ENCODE measurements at regions of chr5 and their contacts with region 1.

Region 1: DNA sequence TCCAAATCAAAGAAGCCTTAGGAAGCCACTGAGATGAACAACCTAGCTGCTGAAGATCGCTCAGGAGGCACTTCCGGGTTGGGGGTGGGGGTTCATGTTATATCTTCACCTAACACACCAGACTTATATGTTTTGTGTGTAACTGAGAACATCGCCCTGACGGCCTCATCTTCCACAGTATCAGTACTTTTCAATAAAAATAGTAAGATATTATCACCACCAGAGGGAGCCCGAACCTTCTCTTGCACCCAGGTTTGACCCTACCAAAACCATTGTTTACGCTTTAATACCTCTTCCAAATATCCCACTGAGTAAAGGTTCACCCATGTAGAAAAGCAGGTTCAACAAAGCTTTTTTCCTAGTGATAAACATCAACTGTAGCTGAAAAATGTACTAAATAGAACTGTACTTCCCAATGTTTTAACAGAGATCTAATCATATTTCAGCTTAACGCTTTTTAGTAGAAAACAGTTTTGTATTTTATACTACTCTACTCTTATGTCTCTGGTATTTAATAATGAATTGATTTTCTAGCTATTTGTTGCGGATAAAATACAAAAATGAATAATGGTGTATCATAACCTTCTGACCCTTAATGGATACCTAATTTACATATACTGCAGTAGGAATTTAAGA is 244.0 kb downstream of the EPB41L4A start:
- DNase-seq: peak; percentile 71
- H3K4me3 Mint-ChIP-seq: no peak overlapping the region
- H3K27ac Mint-ChIP-seq: no peak overlapping the region
- H3K4me1 Mint-ChIP-seq: no peaks in the 10 kb centered on the region
- H3K27me3 Mint-ChIP-seq: no peaks in the 10 kb centered on the region
- CTCF ChIP-seq: peak; percentile 79

Region 2: GRCh38 chr5:111742177-111742994 is 432.7 kb before region 1 on chr5:
- CTCF ChIA-PET with region 1: no interaction called
- POLR2A ChIA-PET with region 1: no interaction called
- intact Hi-C with region 1: no loop called
- DNase-seq: peak; percentile 88
- H3K4me3 Mint-ChIP-seq: no peak overlapping the region
- H3K27ac Mint-ChIP-seq: no peak overlapping the region
- H3K4me1 Mint-ChIP-seq: peaks cover 34% of the 10 kb centered on the region
- H3K27me3 Mint-ChIP-seq: no peaks in the 10 kb centered on the region
- CTCF ChIP-seq: no peak

Region 3: DNA sequence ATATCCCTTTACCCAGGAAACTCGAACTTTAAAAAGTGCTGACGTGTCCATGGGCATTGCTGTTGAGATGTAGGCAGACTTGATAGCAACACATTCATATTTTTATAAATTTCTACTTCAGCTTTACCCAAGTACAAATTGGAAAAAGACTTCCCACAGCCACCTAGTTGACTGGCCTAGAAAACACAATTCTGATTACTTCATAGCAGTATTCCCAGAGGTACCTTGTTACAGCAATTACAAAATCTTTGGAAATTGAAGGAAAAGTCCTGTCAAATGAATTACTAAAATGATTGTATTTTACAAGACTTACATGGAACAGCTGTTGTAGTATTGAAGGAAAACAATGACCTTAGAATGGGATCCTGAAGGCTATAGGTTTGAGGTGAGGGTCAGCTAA is 287.4 kb before region 1 on chr5:
- CTCF ChIA-PET with region 1: no interaction called
- POLR2A ChIA-PET with region 1: no interaction called
- intact Hi-C with region 1: no loop called
- DNase-seq: no peak
- H3K4me3 Mint-ChIP-seq: no peak overlapping the region
- H3K27ac Mint-ChIP-seq: no peak overlapping the region
- H3K4me1 Mint-ChIP-seq: no peaks in the 10 kb centered on the region
- H3K27me3 Mint-ChIP-seq: no peaks in the 10 kb centered on the region
- CTCF ChIP-seq: no peak

Region 4: DNA sequence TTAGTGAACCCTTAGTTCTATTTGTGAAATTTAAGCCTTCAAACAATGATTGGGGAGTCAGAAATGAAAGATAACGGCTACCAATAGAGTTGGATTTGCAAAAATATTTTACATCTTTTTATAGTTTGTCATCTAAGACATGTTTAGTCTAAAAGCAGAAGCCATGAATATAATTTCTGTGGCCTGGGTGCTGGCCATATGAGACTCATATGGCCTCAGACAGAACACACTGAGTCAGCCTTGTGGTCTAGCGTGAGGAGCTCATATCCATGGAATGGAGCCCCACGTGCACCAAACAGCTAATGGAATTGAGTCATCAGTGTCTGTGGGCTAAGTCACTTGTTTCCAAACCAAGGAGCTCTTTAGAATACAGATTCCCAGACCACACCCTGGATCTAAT is 177.4 kb before region 1 on chr5:
- CTCF ChIA-PET with region 1: no interaction called
- POLR2A ChIA-PET with region 1: no interaction called
- intact Hi-C with region 1: no loop called
- DNase-seq: peak; percentile 92
- H3K4me3 Mint-ChIP-seq: no peak overlapping the region
- H3K27ac Mint-ChIP-seq: peak overlapping the region; percentile 54
- H3K4me1 Mint-ChIP-seq: peaks cover 28% of the 10 kb centered on the region
- H3K27me3 Mint-ChIP-seq: no peaks in the 10 kb centered on the region
- CTCF ChIP-seq: no peak

Region 5: DNA sequence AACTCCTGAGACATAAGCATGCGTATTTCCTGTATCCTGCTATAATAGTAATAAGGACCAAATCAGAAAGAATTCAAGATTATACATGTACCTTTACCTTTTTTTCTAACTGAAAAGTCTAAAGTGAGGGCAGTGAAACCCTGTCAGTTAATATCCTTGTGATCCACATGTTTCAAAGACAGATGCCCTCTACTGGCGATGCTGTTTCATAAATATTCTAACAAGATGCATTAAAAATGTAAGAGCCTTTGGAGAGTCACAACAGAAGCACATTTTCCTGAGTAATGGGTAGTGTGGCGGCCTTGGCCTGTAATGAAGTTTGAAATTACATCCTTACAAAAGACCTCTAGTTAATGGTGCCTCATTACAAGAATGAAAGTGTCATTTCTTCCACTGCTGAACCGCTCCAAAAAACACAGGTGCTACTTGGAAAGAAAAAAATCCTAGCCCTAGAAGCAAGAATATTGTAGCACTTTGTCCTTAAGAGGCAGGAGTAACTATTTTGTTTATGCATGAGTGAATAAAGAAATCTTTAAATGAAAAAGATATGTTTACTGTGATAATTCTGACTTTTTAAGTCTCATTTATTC is 11.4 kb after region 1 on chr5:
- CTCF ChIA-PET with region 1: interaction called, 13 read pairs
- POLR2A ChIA-PET with region 1: interaction called, 3 read pairs
- intact Hi-C with region 1: no loop called
- DNase-seq: peak; percentile 56
- H3K4me3 Mint-ChIP-seq: no peak overlapping the region
- H3K27ac Mint-ChIP-seq: no peak overlapping the region
- H3K4me1 Mint-ChIP-seq: peaks cover 10% of the 10 kb centered on the region
- H3K27me3 Mint-ChIP-seq: no peaks in the 10 kb centered on the region
- CTCF ChIP-seq: peak; percentile 48

Region 6: GRCh38 chr5:112217843-112218579 is 42.9 kb after region 1 on chr5:
- CTCF ChIA-PET with region 1: interaction called, 15 read pairs
- POLR2A ChIA-PET with region 1: no interaction called
- intact Hi-C with region 1: no loop called
- DNase-seq: peak; percentile 34
- H3K4me3 Mint-ChIP-seq: no peak overlapping the region
- H3K27ac Mint-ChIP-seq: no peak overlapping the region
- H3K4me1 Mint-ChIP-seq: peaks cover 9% of the 10 kb centered on the region
- H3K27me3 Mint-ChIP-seq: no peaks in the 10 kb centered on the region
- CTCF ChIP-seq: no peak

Region 7: DNA sequence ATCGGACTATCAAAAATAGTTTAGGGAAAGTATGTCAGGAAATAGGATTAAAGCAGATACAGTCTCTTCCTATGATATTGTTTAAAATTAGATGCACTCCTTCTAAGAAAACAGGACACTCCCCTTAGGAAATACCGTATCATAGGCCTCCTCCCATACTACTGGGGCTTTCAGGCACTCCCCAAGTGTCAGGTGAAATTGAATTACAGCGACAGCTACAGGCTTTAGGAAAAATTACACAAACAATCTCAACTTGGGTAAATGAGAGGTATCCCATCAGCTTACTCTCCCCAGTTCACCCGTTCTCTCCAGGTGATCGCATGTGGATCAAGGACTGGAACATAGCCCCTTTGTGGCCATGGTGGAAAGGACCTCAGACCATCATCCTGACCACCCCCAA is 354.4 kb after region 1 on chr5:
- CTCF ChIA-PET with region 1: interaction called, 28 read pairs
- POLR2A ChIA-PET with region 1: no interaction called
- intact Hi-C with region 1: no loop called
- DNase-seq: peak; percentile 45
- H3K4me3 Mint-ChIP-seq: no peak overlapping the region
- H3K27ac Mint-ChIP-seq: no peak overlapping the region
- H3K4me1 Mint-ChIP-seq: no peaks in the 10 kb centered on the region
- H3K27me3 Mint-ChIP-seq: no peaks in the 10 kb centered on the region
- CTCF ChIP-seq: peak; percentile 26